ENCODE measurements at regions of chr13 and their contacts with region 1.

Region 1: DNA sequence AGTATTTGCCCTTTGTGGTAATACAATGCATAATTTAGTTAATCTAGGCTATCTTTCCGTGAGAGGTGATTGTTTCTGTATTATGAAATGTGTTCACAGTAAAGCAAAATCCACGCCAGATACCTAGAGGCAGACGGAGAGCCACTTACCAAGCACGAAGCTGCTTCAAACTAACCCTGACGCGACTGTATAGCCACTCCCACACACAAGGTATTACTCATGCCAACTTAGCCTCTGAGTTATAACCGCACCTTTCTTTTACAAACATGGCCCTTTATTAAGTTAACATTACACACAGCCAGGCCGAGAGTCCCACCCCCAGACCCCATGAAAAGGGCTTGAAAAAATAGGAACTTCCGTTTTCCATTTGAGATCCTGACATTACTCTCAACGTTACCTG is 185.7 kb downstream of the ABCC4 start:
- DNase-seq: peak; percentile 93
- ATAC-seq: peak; percentile 91
- H3K4me3 ChIP-seq: peak overlapping the region; percentile 34
- H3K27ac ChIP-seq: peak overlapping the region; percentile 100
- H3K4me1 ChIP-seq: peaks cover 71% of the 10 kb centered on the region
- H3K27me3 ChIP-seq: no peaks in the 10 kb centered on the region
- CTCF ChIP-seq: no peak

Region 2: DNA sequence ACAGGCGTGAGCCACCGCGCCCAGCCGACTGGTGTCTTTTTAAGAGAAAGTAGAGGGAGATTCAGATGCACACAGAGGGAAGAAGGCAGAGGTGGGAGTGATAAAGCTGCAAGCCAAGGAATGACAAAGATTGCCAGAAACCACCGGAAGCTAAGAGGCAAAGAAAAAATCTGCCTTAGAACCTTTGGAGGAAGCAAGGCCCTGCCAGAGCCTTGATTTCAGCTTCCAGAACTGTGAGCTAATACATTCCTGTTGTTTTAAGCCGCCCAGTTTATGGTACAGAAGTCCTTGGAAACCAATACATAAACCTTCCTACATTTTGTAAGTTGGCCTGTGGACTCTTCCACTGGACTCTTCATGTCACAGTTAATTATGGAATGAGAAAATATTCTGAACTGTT is 331.5 kb before region 1 on chr13:
- CTCF ChIA-PET with region 1: no interaction called
- POLR2A ChIA-PET with region 1: interaction called, 16 read pairs
- intact Hi-C with region 1: no loop called
- DNase-seq: no peak
- ATAC-seq: no peak
- H3K4me3 ChIP-seq: no peak overlapping the region
- H3K27ac ChIP-seq: no peak overlapping the region
- H3K4me1 ChIP-seq: peaks cover 26% of the 10 kb centered on the region
- H3K27me3 ChIP-seq: no peaks in the 10 kb centered on the region
- CTCF ChIP-seq: no peak

Region 3: DNA sequence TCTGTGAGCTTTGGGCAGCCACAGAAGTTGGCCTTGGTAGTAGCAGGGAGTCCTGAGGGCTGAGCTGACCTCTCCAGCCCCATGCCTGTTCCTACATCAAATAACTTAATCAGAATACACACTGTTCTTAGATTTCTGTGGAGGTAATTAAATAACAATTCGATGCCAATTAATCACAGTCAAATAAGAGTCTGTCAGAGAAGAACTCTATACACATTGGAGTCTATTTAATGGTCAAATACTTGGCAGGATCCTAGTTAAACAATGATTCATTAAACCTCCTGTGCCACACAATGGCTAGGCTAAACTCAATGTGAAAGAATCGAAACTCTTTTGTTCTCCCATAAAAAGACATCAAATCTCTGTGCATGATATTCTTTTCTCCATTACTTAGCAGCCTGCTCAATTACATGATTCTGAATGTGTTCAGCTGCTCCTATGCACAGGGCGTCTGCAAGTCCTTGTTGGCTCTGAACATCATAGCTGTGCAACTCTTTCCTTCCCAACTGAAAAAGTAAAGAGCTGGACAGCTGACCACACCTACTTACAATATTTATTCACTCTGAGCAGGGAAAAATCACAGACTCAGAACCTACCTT is 12.6 kb after region 1 on chr13:
- CTCF ChIA-PET with region 1: no interaction called
- POLR2A ChIA-PET with region 1: interaction called, 13 read pairs
- intact Hi-C with region 1: loop called (anchors 2 kb)
- DNase-seq: peak; percentile 83
- ATAC-seq: peak; percentile 88
- H3K4me3 ChIP-seq: peak overlapping the region; percentile 53
- H3K27ac ChIP-seq: peak overlapping the region; percentile 98
- H3K4me1 ChIP-seq: peaks cover 45% of the 10 kb centered on the region
- H3K27me3 ChIP-seq: no peaks in the 10 kb centered on the region
- CTCF ChIP-seq: no peak

Region 4: GRCh38 chr13:95296326-95296925 is 180.9 kb after region 1 on chr13:
- CTCF ChIA-PET with region 1: no interaction called
- POLR2A ChIA-PET with region 1: no interaction called
- intact Hi-C with region 1: no loop called
- DNase-seq: peak; percentile 54
- ATAC-seq: 0 out of 2 replicates have a peak, but pooled peaks have one; percentile 7
- H3K4me3 ChIP-seq: no peak overlapping the region
- H3K27ac ChIP-seq: no peak overlapping the region
- H3K4me1 ChIP-seq: peaks cover 21% of the 10 kb centered on the region
- H3K27me3 ChIP-seq: no peaks in the 10 kb centered on the region
- CTCF ChIP-seq: peak; percentile 81